MCF 10A (cell line): ENCODE measurements at regions of chr1 and their contacts with region 1.

Region 1: GRCh38 chr1:203038891-203039608 is 12.8 kb downstream of the PPFIA4 start:
- DNase-seq: peak; percentile 90
- H3K4me3 Mint-ChIP-seq: no peak overlapping the region
- H3K27ac Mint-ChIP-seq: no peak overlapping the region
- H3K4me1 Mint-ChIP-seq: peaks cover 18% of the 10 kb centered on the region
- H3K27me3 Mint-ChIP-seq: no peaks in the 10 kb centered on the region
- CTCF ChIP-seq: peak; percentile 100

Region 2: GRCh38 chr1:203082571-203083462 is 43.8 kb after region 1 on chr1:
- CTCF ChIA-PET with region 1: interaction called, 24 read pairs
- POLR2A ChIA-PET with region 1: no interaction called
- intact Hi-C with region 1: no loop called
- DNase-seq: no peak
- H3K4me3 Mint-ChIP-seq: no peak overlapping the region
- H3K27ac Mint-ChIP-seq: no peak overlapping the region
- H3K4me1 Mint-ChIP-seq: no peaks in the 10 kb centered on the region
- H3K27me3 Mint-ChIP-seq: peaks cover 41% of the 10 kb centered on the region
- CTCF ChIP-seq: no peak

Region 3: DNA sequence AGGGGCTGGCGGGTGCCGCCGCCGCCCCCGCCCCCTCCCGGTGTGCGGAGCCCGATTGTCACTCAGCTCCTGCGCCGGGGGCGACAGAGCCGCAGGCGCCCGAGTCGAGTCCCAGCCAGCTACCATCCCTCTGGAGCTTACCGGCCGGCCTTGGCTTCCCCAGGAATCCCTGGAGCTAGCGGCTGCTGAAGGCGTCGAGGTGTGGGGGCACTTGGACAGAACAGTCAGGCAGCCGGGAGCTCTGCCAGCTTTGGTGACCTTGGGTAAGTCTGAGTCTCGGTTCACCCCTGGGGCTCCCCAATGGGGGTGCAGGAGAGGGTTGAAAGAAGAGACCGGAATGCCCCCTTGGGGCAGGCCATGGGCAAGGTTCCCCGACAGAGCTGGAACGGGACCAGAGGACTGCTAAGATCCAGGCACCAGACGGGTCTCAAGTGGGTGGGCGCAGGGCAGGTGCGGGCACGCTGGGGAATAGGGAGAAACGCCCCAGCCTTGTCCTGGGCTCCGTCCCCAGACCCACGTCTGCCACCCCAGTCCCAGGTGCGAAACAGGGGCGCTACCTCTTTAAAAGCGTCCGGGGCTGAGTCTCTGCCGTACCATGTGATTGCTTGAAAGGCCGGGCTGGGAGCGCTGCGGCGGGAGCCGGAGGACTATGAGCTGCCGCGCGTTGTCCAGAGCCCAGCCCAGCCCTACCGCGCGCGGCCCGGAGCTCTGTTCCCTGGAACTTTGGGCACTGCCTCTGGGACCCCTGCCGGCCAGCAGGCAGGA is 88.8 kb after region 1 on chr1 and contains the start of gene ADORA1:
- CTCF ChIA-PET with region 1: interaction called, 103 read pairs
- POLR2A ChIA-PET with region 1: interaction called, 3 read pairs
- intact Hi-C with region 1: no loop called
- DNase-seq: peak; percentile 87
- H3K4me3 Mint-ChIP-seq: peak within 1 kb of the TSS; percentile 72
- H3K27ac Mint-ChIP-seq: peak within 1 kb of the TSS; percentile 21
- H3K4me1 Mint-ChIP-seq: peaks cover 18% of the 10 kb centered on the region
- H3K27me3 Mint-ChIP-seq: peaks cover 13% of the 10 kb centered on the region
- CTCF ChIP-seq: no peak
- total RNA-seq, gene ADORA1: 0.26 and 0.34 TPM in 2 replicates

Region 4: DNA sequence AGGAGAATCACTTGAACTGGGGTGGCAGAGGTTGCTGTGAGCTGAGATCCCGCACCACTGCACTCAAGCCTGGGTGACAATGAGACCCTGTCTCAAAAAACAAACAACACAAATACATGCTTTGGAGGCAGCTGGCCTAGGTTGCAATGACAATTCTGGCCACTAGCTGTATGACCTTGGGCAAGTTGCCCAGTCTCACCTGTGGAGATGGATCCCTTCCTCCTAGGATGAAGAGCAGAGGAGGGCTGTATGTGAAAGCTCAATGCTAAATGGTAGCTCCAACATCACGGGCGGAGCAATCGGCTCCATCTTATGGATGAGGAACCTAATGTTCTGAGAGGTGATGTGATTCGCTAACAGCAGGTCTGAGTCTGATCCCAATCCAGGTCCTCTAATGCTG is 109.1 kb after region 1 on chr1:
- CTCF ChIA-PET with region 1: interaction called, 19 read pairs
- POLR2A ChIA-PET with region 1: no interaction called
- intact Hi-C with region 1: no loop called
- DNase-seq: peak; percentile 68
- H3K4me3 Mint-ChIP-seq: no peak overlapping the region
- H3K27ac Mint-ChIP-seq: no peak overlapping the region
- H3K4me1 Mint-ChIP-seq: peaks cover 16% of the 10 kb centered on the region
- H3K27me3 Mint-ChIP-seq: no peaks in the 10 kb centered on the region
- CTCF ChIP-seq: peak; percentile 70

Region 5: DNA sequence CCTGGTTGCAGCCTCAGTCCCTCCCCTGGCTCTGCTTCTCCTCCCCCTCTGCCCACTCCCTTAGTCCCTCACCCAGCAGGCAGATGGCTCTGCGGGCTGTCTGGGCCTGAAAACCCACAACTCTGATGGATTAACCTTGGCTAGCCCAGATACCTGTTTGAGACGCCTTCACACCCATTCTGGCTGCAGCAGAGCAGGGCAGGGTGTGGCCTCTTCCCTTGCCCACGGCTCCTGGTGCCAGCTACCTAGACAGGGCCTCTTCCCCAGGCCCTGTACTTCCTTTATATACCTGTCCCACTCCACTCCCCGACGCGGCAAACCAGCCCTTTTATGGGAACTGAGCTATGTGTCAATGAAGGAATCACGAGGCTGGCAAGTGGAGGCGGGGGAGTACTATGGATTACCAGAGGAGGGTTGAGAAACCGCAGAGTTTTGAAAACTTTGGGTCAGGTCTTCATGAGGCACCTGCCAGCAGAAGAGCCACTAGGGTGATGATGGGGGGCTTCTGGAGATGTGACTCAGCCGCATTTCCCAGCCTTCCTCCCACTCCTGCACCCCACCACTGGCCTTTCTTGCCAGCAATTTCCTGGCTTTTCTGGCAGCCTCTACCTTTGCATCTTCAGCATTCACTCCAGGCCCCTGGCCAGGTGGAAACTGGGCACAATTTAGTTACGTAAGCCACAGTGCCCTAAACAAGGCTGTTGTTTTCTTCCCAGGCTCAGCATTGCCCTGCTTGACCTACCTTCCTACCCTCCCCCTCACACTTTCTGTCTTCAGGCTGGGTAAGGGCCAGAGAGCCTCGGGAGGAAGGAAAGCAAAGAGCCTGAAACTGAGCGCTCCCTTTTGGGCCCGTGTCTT is 147.6 kb after region 1 on chr1 and contains the start of gene CHI3L1:
- CTCF ChIA-PET with region 1: interaction called, 15 read pairs
- POLR2A ChIA-PET with region 1: no interaction called
- intact Hi-C with region 1: no loop called
- DNase-seq: peak; percentile 97
- H3K4me3 Mint-ChIP-seq: no peak within 1 kb of the TSS
- H3K27ac Mint-ChIP-seq: no peak within 1 kb of the TSS
- H3K4me1 Mint-ChIP-seq: peaks cover 13% of the 10 kb centered on the region
- H3K27me3 Mint-ChIP-seq: peaks cover 33% of the 10 kb centered on the region
- CTCF ChIP-seq: no peak
- total RNA-seq, gene CHI3L1: 0.75 and 0.88 TPM in 2 replicates

Region 6: DNA sequence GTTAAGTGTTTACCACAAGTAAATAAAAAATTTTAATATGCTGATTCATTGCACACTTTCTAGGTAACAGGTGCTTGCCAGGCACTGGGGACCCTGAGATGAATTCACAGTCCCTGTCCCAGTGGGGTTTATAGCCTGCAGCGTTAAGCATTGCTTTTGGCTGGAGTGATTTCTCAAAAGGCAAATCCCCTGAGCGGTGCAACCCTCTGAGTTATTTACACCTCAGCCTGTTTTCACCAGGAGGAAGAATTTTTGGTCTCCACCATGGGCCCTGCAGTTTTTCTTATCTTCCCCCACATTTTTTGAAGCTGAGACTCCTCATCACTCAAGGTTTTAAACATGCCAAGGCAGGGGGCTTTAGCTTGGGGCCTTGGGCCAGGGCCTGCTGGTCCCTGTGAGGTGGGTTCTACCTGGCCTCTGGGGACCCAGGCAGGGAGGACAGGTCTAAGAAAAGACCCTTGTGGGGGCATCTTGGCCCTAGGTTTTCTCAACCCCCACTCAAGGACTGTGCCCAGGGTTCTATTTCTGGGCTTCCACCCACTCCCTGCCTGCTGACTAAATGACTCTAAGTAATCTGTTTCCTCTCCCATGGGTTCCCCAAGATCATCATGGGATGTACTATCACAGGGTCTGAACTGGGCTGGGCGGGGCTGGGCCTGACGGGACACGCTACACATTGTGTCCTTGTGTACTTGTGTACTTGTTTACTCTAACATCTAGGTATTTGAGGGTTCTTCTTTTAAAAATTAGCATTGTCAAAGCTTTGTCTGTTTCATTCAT is 200.7 kb after region 1 on chr1:
- CTCF ChIA-PET with region 1: interaction called, 11 read pairs
- POLR2A ChIA-PET with region 1: no interaction called
- intact Hi-C with region 1: no loop called
- DNase-seq: no peak
- H3K4me3 Mint-ChIP-seq: no peak overlapping the region
- H3K27ac Mint-ChIP-seq: no peak overlapping the region
- H3K4me1 Mint-ChIP-seq: no peaks in the 10 kb centered on the region
- H3K27me3 Mint-ChIP-seq: peaks cover 53% of the 10 kb centered on the region
- CTCF ChIP-seq: no peak

Region 7: GRCh38 chr1:203326830-203327683 is 288.0 kb after region 1 on chr1:
- CTCF ChIA-PET with region 1: interaction called, 4 read pairs
- POLR2A ChIA-PET with region 1: interaction called, 3 read pairs
- intact Hi-C with region 1: loop called (anchors 5 kb)
- DNase-seq: peak; percentile 97
- H3K4me3 Mint-ChIP-seq: peak overlapping the region; percentile 71
- H3K27ac Mint-ChIP-seq: peak overlapping the region; percentile 57
- H3K4me1 Mint-ChIP-seq: peaks cover 32% of the 10 kb centered on the region
- H3K27me3 Mint-ChIP-seq: peaks cover 16% of the 10 kb centered on the region
- CTCF ChIP-seq: no peak